ENCODE measurements at regions of chr15 and their contacts with region 1.

Region 1: GRCh38 chr15:64740311-64741170 is 34.8 kb downstream of the RBPMS2 start:
- DNase-seq: no peak

Region 2: DNA sequence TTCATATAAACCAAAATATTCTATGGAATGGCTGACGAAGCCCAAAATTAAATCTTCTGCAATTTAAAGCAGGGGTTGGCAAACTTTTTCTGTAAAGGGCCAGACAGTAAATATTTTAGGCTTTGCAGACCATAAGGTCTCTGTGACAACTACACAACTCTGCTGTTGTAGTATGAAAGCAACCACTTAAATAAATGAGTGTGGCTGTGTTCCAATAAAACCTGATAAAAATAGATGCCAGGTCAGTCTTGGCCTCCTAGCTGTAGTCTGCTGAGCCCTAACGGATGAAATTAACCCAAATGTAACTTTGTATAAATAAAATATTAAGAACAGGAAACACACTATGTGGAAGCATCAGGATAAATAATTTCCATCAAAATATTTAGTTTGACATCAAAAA is 1039.2 kb before region 1 on chr15:
- intact Hi-C with region 1: no loop called
- DNase-seq: no peak

Region 3: GRCh38 chr15:64905119-64905831 is 164.7 kb after region 1 on chr15:
- intact Hi-C with region 1: loop called in 1 of 2 experiments (anchors 5 kb)
- DNase-seq: peak; percentile 94